ENCODE measurements at regions of chr1 and their contacts with region 1.

Region 1: DNA sequence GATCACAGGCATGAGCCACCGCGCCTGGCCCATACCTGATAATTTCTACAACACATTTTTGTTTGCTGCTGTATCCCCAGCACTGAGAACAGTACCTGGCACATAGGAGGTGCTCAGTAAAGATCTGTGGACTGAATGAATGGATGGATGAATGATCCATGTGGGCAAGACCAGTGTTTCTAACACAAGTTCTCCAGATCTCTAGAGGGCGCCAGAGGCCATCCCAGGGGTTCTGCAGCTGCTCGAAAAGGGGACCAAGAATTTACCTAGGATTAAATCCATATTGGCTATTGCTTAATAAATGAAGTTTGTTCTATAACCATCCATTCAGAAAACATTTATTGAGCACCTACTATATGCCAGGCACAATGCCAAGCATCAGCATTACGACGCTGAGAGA is 167.7 kb downstream of the ACTL8 start:
- DNase-seq: peak; percentile 15 to 75
- H3K4me3 ChIP-seq: no peak overlapping the region
- H3K27ac ChIP-seq: no peak overlapping the region
- H3K4me1 ChIP-seq: 0 out of 7 replicates have a peak, but pooled peaks cover 0 to 2% (median 0%) of the 10 kb centered on the region in 4 experiments
- H3K27me3 ChIP-seq: peaks cover 0 to 4% (median 0%) of the 10 kb centered on the region in 4 experiments; a peak in 2 of 7 replicates
- CTCF ChIP-seq: peak; percentile 68 to 87 (median 75)
- EP300 ChIP-seq: no peak
- POLR2A ChIP-seq: no peak
- RAD21 ChIP-seq: peak; percentile 95 to 96

Region 2: GRCh38 chr1:17912491-17912890 is 10.3 kb before region 1 on chr1:
- CTCF ChIA-PET with region 1: interaction called, 11 read pairs
- POLR2A ChIA-PET with region 1: no interaction called
- DNase-seq: no peak
- H3K4me3 ChIP-seq: no peak overlapping the region
- H3K27ac ChIP-seq: no peak overlapping the region
- H3K4me1 ChIP-seq: peaks cover 0 to 11% (median 5%) of the 10 kb centered on the region in 4 experiments; a peak in 6 of 7 replicates
- H3K27me3 ChIP-seq: peaks cover 0 to 4% (median 0%) of the 10 kb centered on the region in 4 experiments; a peak in 2 of 7 replicates
- CTCF ChIP-seq: no peak
- EP300 ChIP-seq: no peak
- POLR2A ChIP-seq: no peak
- RAD21 ChIP-seq: no peak

Region 3: GRCh38 chr1:17944606-17945005 is 21.8 kb after region 1 on chr1:
- CTCF ChIA-PET with region 1: interaction called, 31 read pairs
- POLR2A ChIA-PET with region 1: no interaction called
- DNase-seq: no peak
- H3K4me3 ChIP-seq: no peak overlapping the region
- H3K27ac ChIP-seq: no peak overlapping the region
- H3K4me1 ChIP-seq: peaks cover 0 to 6% (median 0%) of the 10 kb centered on the region in 4 experiments; a peak in 4 of 7 replicates
- H3K27me3 ChIP-seq: no peaks in the 10 kb centered on the region; a peak in 1 of 7 replicates
- CTCF ChIP-seq: no peak
- EP300 ChIP-seq: no peak
- POLR2A ChIP-seq: no peak
- RAD21 ChIP-seq: no peak

Region 4: DNA sequence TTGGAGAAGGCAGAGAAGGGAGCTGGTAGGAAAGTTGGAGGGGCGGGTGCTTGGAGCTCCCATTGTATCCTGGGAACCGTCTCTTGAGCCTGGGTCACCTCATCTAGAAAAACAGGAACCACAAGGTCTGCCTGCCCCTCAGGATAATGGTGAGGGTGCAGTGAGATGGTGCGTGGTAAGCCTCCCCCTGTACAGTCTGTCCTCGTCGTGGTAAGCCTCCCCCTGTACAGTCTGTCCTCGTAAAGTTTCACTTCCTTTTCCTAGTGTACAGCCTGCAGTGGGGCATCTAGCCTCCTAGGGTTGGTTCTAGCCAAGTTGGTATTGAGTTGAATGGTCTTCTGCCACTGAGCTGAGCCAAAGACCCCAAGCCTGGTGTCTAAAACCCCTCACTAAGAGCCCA is 118.3 kb after region 1 on chr1:
- CTCF ChIA-PET with region 1: interaction called, 11 read pairs
- POLR2A ChIA-PET with region 1: no interaction called
- DNase-seq: no peak
- H3K4me3 ChIP-seq: no peak overlapping the region
- H3K27ac ChIP-seq: no peak overlapping the region
- H3K4me1 ChIP-seq: no peaks in the 10 kb centered on the region
- H3K27me3 ChIP-seq: peaks cover 0 to 3% (median 0%) of the 10 kb centered on the region in 4 experiments; a peak in 3 of 7 replicates
- CTCF ChIP-seq: no peak
- EP300 ChIP-seq: no peak
- POLR2A ChIP-seq: no peak
- RAD21 ChIP-seq: no peak

Region 5: DNA sequence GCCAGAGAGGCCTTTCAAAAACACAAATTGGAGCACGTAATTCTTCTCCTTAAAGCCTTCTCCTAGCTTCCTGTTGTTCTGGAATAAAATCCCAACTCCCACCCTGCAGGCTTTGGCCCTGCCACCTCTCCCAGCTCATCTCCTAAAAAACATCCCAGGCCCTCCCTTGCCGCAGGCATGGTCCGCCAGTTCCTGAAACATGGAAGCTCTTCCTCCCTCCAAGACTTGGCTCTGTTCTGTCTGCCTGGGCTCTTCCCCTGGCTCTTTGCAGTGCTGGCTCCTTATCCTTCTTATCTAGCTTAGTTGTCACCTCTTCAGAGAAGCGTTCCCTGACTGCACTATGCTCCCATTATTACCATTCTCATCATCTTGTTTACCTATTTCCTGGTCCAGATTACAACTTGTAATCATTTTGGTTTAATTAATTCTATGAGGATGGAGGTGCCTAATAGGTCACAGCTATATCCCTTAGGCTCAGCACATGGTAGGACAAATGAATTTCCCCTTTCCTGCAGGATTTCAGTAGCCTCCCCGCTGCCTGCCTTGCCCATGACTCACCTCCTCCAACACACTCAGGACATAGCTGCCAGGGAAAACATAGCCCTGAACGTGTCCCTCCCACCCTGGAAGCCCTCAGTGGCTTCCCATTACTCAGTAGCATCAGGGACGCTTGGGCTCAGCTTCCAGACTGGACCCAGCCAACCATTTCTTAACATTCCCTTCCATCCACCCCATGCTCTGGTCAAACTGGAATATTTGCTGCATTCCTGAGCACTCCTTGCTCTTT is 169.0 kb after region 1 on chr1:
- CTCF ChIA-PET with region 1: interaction called, 13 read pairs
- POLR2A ChIA-PET with region 1: no interaction called
- DNase-seq: no peak
- H3K4me3 ChIP-seq: peak overlapping the region in 1 of 4 experiments; percentile 5; a peak in 2 of 8 replicates
- H3K27ac ChIP-seq: no peak overlapping the region
- H3K4me1 ChIP-seq: peaks cover 6 to 23% (median 15%) of the 10 kb centered on the region in 4 experiments
- H3K27me3 ChIP-seq: peaks cover 0 to 5% (median 0%) of the 10 kb centered on the region in 4 experiments; a peak in 1 of 7 replicates
- CTCF ChIP-seq: no peak
- EP300 ChIP-seq: no peak
- POLR2A ChIP-seq: no peak
- RAD21 ChIP-seq: no peak

Region 6: GRCh38 chr1:18217398-18218043 is 294.7 kb after region 1 on chr1:
- CTCF ChIA-PET with region 1: interaction called, 10 read pairs
- POLR2A ChIA-PET with region 1: no interaction called
- DNase-seq: peak; percentile 27 to 68
- H3K4me3 ChIP-seq: no peak overlapping the region
- H3K27ac ChIP-seq: no peak overlapping the region
- H3K4me1 ChIP-seq: no peaks in the 10 kb centered on the region
- H3K27me3 ChIP-seq: no peaks in the 10 kb centered on the region; a peak in 1 of 7 replicates
- CTCF ChIP-seq: peak; percentile 76 to 87 (median 76)
- EP300 ChIP-seq: no peak
- POLR2A ChIP-seq: no peak
- RAD21 ChIP-seq: peak; percentile 68 to 81

Region 7: GRCh38 chr1:18575620-18576019 is 652.8 kb after region 1 on chr1:
- CTCF ChIA-PET with region 1: interaction called, 24 read pairs
- POLR2A ChIA-PET with region 1: no interaction called
- DNase-seq: peak; percentile 86 to 99
- H3K4me3 ChIP-seq: no peak overlapping the region
- H3K27ac ChIP-seq: no peak overlapping the region
- H3K4me1 ChIP-seq: no peaks in the 10 kb centered on the region; a peak in 1 of 7 replicates
- H3K27me3 ChIP-seq: no peaks in the 10 kb centered on the region; a peak in 1 of 7 replicates
- CTCF ChIP-seq: peak; percentile 84 to 96 (median 94)
- EP300 ChIP-seq: no peak
- POLR2A ChIP-seq: no peak
- RAD21 ChIP-seq: peak; percentile 98 to 99

Measured in H1 (cell line).